Activated naive CD4-positive, alpha-beta T cell treated with anti-CD3 and anti-CD28 coated beads for 36 hours (primary cell): ENCODE measurements at regions of chr3 and their contacts with region 1.

Region 1: GRCh38 chr3:194486540-194487288 is at the start of gene ATP13A3:
- DNase-seq: peak; percentile 86
- H3K4me3 Mint-ChIP-seq: peak within 1 kb of the TSS; percentile 91
- H3K27ac Mint-ChIP-seq: peak within 1 kb of the TSS; percentile 94
- H3K4me1 Mint-ChIP-seq: peaks cover 59% of the 10 kb centered on the region
- H3K27me3 Mint-ChIP-seq: no peaks in the 10 kb centered on the region
- total RNA-seq, gene ATP13A3: 88.4 to 92.3 TPM

Region 2: GRCh38 chr3:194395778-194396547 is 90.8 kb before region 1 on chr3:
- CTCF ChIA-PET with region 1: no interaction called
- intact Hi-C with region 1: loop called (anchors 2 kb)
- DNase-seq: peak; percentile 85
- H3K4me3 Mint-ChIP-seq: peak overlapping the region; percentile 42
- H3K27ac Mint-ChIP-seq: peak overlapping the region; percentile 21
- H3K4me1 Mint-ChIP-seq: peaks cover 53% of the 10 kb centered on the region
- H3K27me3 Mint-ChIP-seq: peaks cover 5% of the 10 kb centered on the region

Region 3: DNA sequence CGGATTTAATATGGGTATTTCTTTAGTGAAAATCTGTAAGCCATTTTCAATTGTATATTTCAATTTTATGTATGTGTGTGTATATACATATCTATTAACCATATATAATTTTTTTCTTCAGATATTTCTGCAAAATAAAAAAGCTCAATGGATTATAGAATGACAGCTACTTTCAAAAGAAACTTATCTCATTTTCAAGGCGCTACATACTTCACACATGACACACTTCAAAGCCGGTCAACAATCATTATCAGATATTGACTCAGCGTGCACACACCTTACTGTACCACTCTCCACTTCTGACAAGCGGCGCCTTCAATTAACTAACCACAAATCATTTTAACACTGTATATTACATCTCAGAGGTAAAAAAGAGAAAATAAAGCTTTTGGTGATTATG is 39.6 kb before region 1 on chr3:
- CTCF ChIA-PET with region 1: no interaction called
- intact Hi-C with region 1: no loop called
- DNase-seq: no peak
- H3K4me3 Mint-ChIP-seq: no peak overlapping the region
- H3K27ac Mint-ChIP-seq: no peak overlapping the region
- H3K4me1 Mint-ChIP-seq: peaks cover 2% of the 10 kb centered on the region
- H3K27me3 Mint-ChIP-seq: no peaks in the 10 kb centered on the region

Region 4: GRCh38 chr3:194472290-194472920 is 14.3 kb before region 1 on chr3:
- CTCF ChIA-PET with region 1: interaction called, 7 read pairs
- intact Hi-C with region 1: loop called (anchors 1 kb)
- DNase-seq: peak; percentile 42
- H3K4me3 Mint-ChIP-seq: no peak overlapping the region
- H3K27ac Mint-ChIP-seq: no peak overlapping the region
- H3K4me1 Mint-ChIP-seq: peaks cover 24% of the 10 kb centered on the region
- H3K27me3 Mint-ChIP-seq: no peaks in the 10 kb centered on the region

Region 5: DNA sequence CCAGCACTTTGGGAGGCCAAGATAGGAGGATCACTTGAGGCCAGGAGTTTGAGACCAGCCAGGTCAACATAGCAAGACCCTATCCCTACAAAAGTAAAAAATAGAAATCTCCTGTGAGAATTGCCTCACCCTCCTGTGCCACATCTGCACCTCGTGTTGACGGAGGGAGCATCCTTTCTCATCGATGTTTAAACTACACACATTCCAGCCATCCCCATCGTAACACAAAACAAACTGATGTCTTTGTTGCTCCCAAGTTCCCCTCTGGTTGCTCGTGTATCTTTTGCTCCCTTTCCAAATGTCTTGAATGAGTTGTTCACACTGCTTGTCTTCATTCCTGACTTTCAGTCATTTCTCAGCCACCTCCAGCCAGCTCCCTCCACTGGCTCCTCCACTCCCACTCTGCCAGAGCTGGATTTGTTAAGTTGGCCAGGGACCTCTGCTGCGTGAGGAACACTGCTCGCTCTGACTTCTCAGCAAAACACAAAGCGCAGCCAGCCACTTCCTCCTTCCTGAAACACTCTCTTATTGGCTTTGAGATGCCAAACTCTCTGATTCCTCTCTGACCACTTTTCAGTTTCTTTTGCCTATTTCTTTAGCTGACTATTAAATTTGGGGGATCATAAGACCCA is 53.7 kb after region 1 on chr3:
- CTCF ChIA-PET with region 1: no interaction called
- intact Hi-C with region 1: no loop called
- DNase-seq: peak; percentile 21
- H3K4me3 Mint-ChIP-seq: no peak overlapping the region
- H3K27ac Mint-ChIP-seq: no peak overlapping the region
- H3K4me1 Mint-ChIP-seq: peaks cover 13% of the 10 kb centered on the region
- H3K27me3 Mint-ChIP-seq: no peaks in the 10 kb centered on the region

Region 6: GRCh38 chr3:194573691-194574437 is 87.2 kb after region 1 on chr3:
- CTCF ChIA-PET with region 1: interaction called, 5 read pairs
- intact Hi-C with region 1: loop called (anchors 1 kb)
- DNase-seq: peak; percentile 68
- H3K4me3 Mint-ChIP-seq: no peak overlapping the region
- H3K27ac Mint-ChIP-seq: no peak overlapping the region
- H3K4me1 Mint-ChIP-seq: peaks cover 18% of the 10 kb centered on the region
- H3K27me3 Mint-ChIP-seq: peaks cover 19% of the 10 kb centered on the region

Region 7: GRCh38 chr3:194671900-194672808 is 185.4 kb after region 1 on chr3 and contains the start of gene LSG1:
- CTCF ChIA-PET with region 1: no interaction called
- intact Hi-C with region 1: loop called (anchors 1 kb)
- DNase-seq: peak; percentile 94
- H3K4me3 Mint-ChIP-seq: peak within 1 kb of the TSS; percentile 99
- H3K27ac Mint-ChIP-seq: peak within 1 kb of the TSS; percentile 97
- H3K4me1 Mint-ChIP-seq: peaks cover 55% of the 10 kb centered on the region
- H3K27me3 Mint-ChIP-seq: no peaks in the 10 kb centered on the region
- total RNA-seq, gene LSG1: 26.4 to 27.0 TPM

Region 8: GRCh38 chr3:195542698-195543499 is 1056.2 kb after region 1 on chr3 and contains the start of gene PPP1R2:
- CTCF ChIA-PET with region 1: no interaction called
- intact Hi-C with region 1: loop called (anchors 5 kb)
- DNase-seq: peak; percentile 93
- H3K4me3 Mint-ChIP-seq: peak within 1 kb of the TSS; percentile 88
- H3K27ac Mint-ChIP-seq: peak within 1 kb of the TSS; percentile 94
- H3K4me1 Mint-ChIP-seq: peaks cover 53% of the 10 kb centered on the region
- H3K27me3 Mint-ChIP-seq: no peaks in the 10 kb centered on the region
- total RNA-seq, gene PPP1R2: 99.7 to 105 TPM